Endothelial cell of umbilical vein (primary cell): ENCODE measurements at regions of chr5 and their contacts with region 1.

Region 1: GRCh38 chr5:75053304-75054133 is 1.2 kb upstream of the GCNT4 start:
- DNase-seq: peak; percentile 68
- H3K4me3 ChIP-seq: peak overlapping the region; percentile 28 to 51 (median 48)
- H3K27ac ChIP-seq: no peak overlapping the region
- H3K4me1 ChIP-seq: peaks cover 14% of the 10 kb centered on the region
- H3K27me3 ChIP-seq: peaks cover 0 to 2% of the 10 kb centered on the region in 2 experiments
- CTCF ChIP-seq: peak in 1 of 2 donors; percentile 8
- POLR2A ChIP-seq: no peak

Region 2: DNA sequence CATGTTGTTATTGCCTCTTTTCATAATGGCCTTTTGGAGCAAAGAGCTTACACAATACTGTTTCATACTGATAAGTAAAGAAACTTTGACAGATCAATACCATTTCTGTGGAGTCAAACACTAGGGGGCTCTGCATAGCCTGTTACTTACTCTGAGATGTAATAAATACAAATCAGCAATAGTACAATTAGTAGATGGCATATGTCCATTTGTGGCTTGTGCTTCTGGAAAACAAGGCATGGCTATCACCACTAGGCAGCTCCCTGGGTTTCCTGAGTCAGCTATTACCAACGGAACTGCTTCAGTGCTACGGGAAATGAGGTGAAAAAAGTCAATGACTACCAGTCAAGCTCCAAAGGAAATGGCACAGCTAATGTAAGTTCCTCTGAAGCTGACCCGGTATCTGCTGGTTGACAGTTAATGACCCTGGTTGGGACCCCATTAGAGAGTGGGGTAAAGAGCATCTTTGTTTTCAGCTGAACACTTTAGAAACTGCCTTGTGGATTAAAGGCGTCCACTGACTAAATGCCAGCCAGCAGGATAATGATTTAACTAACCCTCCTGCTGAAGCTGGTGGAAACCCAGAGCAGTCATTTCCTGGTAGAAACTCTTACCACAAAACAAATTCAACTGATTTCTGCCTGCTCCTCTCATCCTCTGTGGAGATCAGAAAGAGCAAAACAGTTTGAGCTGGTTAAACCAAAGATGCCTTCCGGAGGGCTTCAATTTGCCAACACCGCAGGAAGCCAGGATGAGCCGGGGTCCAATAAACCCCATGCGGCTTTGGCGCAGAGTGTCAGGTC is 118.4 kb before region 1 on chr5:
- CTCF ChIA-PET with region 1: interaction called, 3 read pairs
- POLR2A ChIA-PET with region 1: no interaction called
- dilution Hi-C with region 1: no loop called
- intact Hi-C with region 1: loop called (anchors 5 kb)
- DNase-seq: peak; percentile 95
- H3K4me3 ChIP-seq: peak overlapping the region in 1 of 3 experiments; percentile 6
- H3K27ac ChIP-seq: peak overlapping the region; percentile 13
- H3K4me1 ChIP-seq: peaks cover 24% of the 10 kb centered on the region
- H3K27me3 ChIP-seq: no peaks in the 10 kb centered on the region
- CTCF ChIP-seq: peak; percentile 23 to 37
- POLR2A ChIP-seq: no peak

Region 3: GRCh38 chr5:74992756-74993155 is 60.8 kb before region 1 on chr5:
- CTCF ChIA-PET with region 1: no interaction called
- POLR2A ChIA-PET with region 1: no interaction called
- dilution Hi-C with region 1: no loop called
- intact Hi-C with region 1: no loop called
- DNase-seq: no peak
- H3K4me3 ChIP-seq: no peak overlapping the region
- H3K27ac ChIP-seq: no peak overlapping the region
- H3K4me1 ChIP-seq: no peaks in the 10 kb centered on the region
- H3K27me3 ChIP-seq: peaks cover 0 to 4% of the 10 kb centered on the region in 2 experiments
- CTCF ChIP-seq: no peak
- POLR2A ChIP-seq: no peak

Region 4: GRCh38 chr5:75236322-75237316 is 183.1 kb after region 1 on chr5 and contains the start of gene ANKRD31:
- CTCF ChIA-PET with region 1: interaction called, 5 read pairs
- POLR2A ChIA-PET with region 1: no interaction called
- dilution Hi-C with region 1: no loop called
- intact Hi-C with region 1: loop called (anchors 10 kb)
- DNase-seq: peak; percentile 71
- H3K4me3 ChIP-seq: peak within 1 kb of the TSS; percentile 8 to 57 (median 53)
- H3K27ac ChIP-seq: no peak within 1 kb of the TSS
- H3K4me1 ChIP-seq: peaks cover 3% of the 10 kb centered on the region
- H3K27me3 ChIP-seq: no peaks in the 10 kb centered on the region
- CTCF ChIP-seq: peak; percentile 67 to 86
- POLR2A ChIP-seq: peak; percentile 38
- total RNA-seq, gene ANKRD31: not detected in 2 replicates

Region 5: DNA sequence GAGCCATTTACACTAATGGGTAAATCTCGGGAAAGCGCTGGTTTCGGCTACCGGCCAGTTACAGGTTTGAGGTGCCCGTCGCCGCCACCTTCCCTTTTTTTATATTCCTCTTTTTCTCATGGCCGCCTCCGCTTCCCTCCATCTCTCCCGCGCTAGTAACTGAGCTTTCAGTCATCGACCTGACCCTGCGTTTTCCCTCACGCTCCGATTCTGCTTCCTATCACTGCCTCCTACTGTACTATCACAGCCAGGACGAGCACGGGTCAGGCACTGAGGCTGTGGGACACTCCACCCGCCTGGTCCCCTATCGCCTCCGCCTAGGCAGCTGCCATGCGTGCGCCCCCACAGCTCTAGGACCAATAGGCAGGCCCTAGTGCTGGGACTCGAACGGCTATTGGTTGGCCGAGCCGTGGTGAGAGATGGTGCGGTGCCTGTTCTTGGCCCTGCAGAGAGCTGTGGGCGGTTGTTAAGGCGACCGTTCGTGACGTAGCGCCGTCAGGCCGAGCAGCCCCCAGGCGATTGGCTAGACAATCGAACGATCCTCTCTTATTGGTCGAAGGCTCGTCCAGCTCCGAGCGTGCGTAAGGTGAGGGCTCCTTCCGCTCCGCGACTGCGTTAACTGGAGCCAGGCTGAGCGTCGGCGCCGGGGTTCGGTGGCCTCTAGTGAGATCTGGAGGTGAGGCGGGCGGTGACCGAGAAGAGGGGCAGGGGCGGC is 283.3 kb after region 1 on chr5 and contains the start of gene HMGCR:
- CTCF ChIA-PET with region 1: interaction called, 4 read pairs
- POLR2A ChIA-PET with region 1: no interaction called
- dilution Hi-C with region 1: no loop called
- intact Hi-C with region 1: loop called (anchors 1 kb)
- DNase-seq: peak; percentile 99
- H3K4me3 ChIP-seq: peak within 1 kb of the TSS; percentile 69 to 97 (median 82)
- H3K27ac ChIP-seq: peak within 1 kb of the TSS; percentile 60
- H3K4me1 ChIP-seq: peaks cover 26% of the 10 kb centered on the region
- H3K27me3 ChIP-seq: no peaks in the 10 kb centered on the region
- CTCF ChIP-seq: peak in 1 of 2 donors; percentile 16
- POLR2A ChIP-seq: peak; percentile 77
- total RNA-seq, gene HMGCR: 104 and 128 TPM in 2 replicates

Region 6: GRCh38 chr5:75668977-75669689 is 615.6 kb after region 1 on chr5:
- CTCF ChIA-PET with region 1: no interaction called
- POLR2A ChIA-PET with region 1: no interaction called
- dilution Hi-C with region 1: no loop called
- intact Hi-C with region 1: loop called (anchors 5 kb)
- DNase-seq: peak; percentile 95
- H3K4me3 ChIP-seq: peak overlapping the region in 1 of 3 experiments; percentile 38
- H3K27ac ChIP-seq: peak overlapping the region; percentile 71
- H3K4me1 ChIP-seq: peaks cover 23% of the 10 kb centered on the region
- H3K27me3 ChIP-seq: no peaks in the 10 kb centered on the region
- CTCF ChIP-seq: no peak
- POLR2A ChIP-seq: peak; percentile 57

Region 7: DNA sequence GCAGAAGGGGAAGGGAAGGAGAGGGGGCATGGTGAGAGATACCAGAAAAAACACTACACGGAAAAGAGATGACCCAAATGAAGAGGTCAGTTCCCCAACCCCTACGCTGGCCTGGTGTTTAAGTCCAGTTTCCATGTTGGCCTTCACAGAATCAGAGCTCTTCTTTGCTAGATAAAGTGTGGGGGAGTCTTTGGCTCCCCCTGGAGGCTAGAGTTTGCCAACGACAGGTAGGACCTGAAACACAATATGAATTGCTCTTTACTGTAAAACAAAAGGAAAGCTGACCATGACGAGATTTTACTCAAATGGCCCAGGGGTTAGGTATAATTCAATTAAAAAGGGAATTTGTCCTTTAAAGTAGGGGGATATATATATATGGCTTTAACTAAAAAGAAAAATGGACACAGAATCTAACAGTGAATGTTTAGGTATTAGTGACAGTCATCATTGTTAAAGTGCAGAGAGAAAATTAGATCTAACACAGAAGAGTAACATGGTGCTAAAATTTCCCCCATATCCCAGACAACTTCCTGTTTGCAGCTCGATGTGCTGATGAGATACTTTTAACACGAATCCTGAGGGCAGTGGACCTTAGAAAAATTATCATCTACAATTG is 1121.6 kb after region 1 on chr5:
- CTCF ChIA-PET with region 1: interaction called, 15 read pairs
- POLR2A ChIA-PET with region 1: no interaction called
- dilution Hi-C with region 1: no loop called
- intact Hi-C with region 1: loop called (anchors 5 kb)
- DNase-seq: peak; percentile 68
- H3K4me3 ChIP-seq: no peak overlapping the region
- H3K27ac ChIP-seq: no peak overlapping the region
- H3K4me1 ChIP-seq: no peaks in the 10 kb centered on the region
- H3K27me3 ChIP-seq: peaks cover 0 to 2% of the 10 kb centered on the region in 2 experiments
- CTCF ChIP-seq: peak; percentile 79 to 85
- POLR2A ChIP-seq: no peak